Activated B cell treated with CpG ODN at 0.5 μM for 24 hours (primary cell): ENCODE measurements at regions of chr15 and their contacts with region 1.

Region 1: DNA sequence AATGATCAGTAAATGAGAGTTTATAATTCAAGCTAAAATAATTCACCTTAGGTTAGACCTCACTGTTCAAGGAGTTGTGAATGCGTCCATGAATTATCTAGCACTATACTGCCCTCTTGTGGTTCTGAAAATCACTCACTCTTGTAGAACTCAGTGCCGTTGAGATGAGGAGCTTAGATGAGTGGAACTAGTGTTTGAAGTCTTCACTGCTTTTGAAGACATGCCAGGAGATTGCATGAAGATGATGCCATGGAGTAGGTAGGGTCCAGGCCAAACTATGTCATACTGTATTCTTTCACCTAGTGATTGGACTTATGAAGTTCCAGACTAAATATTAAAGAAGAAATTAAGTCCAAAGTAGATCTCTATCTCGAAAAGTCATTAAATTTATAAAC is 28.8 kb downstream of the LYSMD4 start:
- DNase-seq: no peak
- ATAC-seq: peak; percentile 83
- H3K4me3 Mint-ChIP-seq: no peak overlapping the region
- H3K27ac Mint-ChIP-seq: peak overlapping the region; percentile 24
- H3K4me1 Mint-ChIP-seq: peaks cover 27% of the 10 kb centered on the region
- H3K27me3 Mint-ChIP-seq: no peaks in the 10 kb centered on the region
- CTCF ChIP-seq: no peak

Region 2: DNA sequence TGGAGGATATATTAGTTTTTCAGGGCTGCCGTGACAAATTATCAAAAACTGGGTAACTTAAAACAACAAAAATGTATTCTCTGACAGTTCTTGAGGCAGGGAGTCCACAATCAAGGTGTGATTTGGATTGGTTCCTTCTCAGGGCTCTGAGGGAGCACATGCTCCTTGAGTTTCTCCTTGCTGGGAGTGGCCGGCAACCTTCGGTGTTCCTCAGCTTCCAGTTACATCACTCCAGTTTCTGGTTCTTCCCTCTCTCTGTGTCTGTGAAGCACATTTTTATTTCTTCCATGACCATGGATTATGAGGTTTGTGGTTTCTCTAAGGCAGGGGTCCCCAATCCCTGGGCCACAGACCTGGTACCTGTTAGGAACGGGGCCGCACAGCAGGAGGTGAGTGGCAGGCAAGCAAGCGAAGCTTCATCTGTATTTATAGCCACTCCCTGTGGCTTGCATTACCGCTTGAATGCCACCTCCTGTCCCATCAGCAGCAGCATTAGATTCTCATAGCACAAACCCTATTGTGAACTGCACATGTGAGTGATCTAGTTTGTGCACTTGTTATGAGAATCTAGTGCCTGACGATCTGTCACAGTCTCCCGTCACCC is 428.8 kb before region 1 on chr15:
- CTCF ChIA-PET with region 1: interaction called, 143 read pairs
- POLR2A ChIA-PET with region 1: interaction called, 7 read pairs
- intact Hi-C with region 1: loop called (anchors 1 kb)
- DNase-seq: no peak
- ATAC-seq: peak; percentile 34
- H3K4me3 Mint-ChIP-seq: no peak overlapping the region
- H3K27ac Mint-ChIP-seq: no peak overlapping the region
- H3K4me1 Mint-ChIP-seq: peaks cover 10% of the 10 kb centered on the region
- H3K27me3 Mint-ChIP-seq: no peaks in the 10 kb centered on the region
- CTCF ChIP-seq: no peak

Region 3: GRCh38 chr15:99343881-99344551 is 360.4 kb before region 1 on chr15:
- CTCF ChIA-PET with region 1: interaction called, 44 read pairs
- POLR2A ChIA-PET with region 1: interaction called, 4 read pairs
- intact Hi-C with region 1: loop called (anchors 1 kb)
- DNase-seq: peak; percentile 20
- ATAC-seq: peak; percentile 61
- H3K4me3 Mint-ChIP-seq: no peak overlapping the region
- H3K27ac Mint-ChIP-seq: no peak overlapping the region
- H3K4me1 Mint-ChIP-seq: peaks cover 31% of the 10 kb centered on the region
- H3K27me3 Mint-ChIP-seq: no peaks in the 10 kb centered on the region
- CTCF ChIP-seq: no peak

Region 4: GRCh38 chr15:99409097-99409473 is 295.4 kb before region 1 on chr15:
- CTCF ChIA-PET with region 1: interaction called, 60 read pairs
- POLR2A ChIA-PET with region 1: interaction called, 3 read pairs
- intact Hi-C with region 1: loop called (anchors 1 kb)
- DNase-seq: no peak
- ATAC-seq: peak; percentile 50
- H3K4me3 Mint-ChIP-seq: no peak overlapping the region
- H3K27ac Mint-ChIP-seq: no peak overlapping the region
- H3K4me1 Mint-ChIP-seq: peaks cover 5% of the 10 kb centered on the region
- H3K27me3 Mint-ChIP-seq: no peaks in the 10 kb centered on the region
- CTCF ChIP-seq: no peak

Region 5: DNA sequence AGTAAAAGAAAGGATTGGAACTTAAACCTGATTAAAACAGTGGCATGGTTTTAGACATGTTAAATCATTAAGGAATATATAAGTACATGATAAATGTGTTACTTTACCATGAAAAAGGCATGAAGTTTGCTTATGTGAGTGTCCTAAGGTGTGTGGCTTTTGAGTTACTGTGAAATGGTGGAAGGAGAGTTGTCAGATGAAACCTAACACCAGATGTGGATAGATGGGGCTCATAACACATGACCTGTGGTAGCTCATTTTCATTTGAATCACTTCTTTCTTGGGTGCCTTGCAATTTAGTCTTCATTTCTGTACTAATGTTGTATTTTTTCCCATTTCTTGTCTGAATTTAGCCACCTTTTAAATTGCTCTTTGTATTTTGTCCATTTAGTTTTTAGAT is 125.6 kb before region 1 on chr15:
- CTCF ChIA-PET with region 1: interaction called, 17 read pairs
- POLR2A ChIA-PET with region 1: no interaction called
- intact Hi-C with region 1: no loop called
- DNase-seq: no peak
- ATAC-seq: no peak
- H3K4me3 Mint-ChIP-seq: peak overlapping the region; percentile 29
- H3K27ac Mint-ChIP-seq: peak overlapping the region; percentile 4
- H3K4me1 Mint-ChIP-seq: peaks cover 83% of the 10 kb centered on the region
- H3K27me3 Mint-ChIP-seq: no peaks in the 10 kb centered on the region
- CTCF ChIP-seq: no peak

Region 6: DNA sequence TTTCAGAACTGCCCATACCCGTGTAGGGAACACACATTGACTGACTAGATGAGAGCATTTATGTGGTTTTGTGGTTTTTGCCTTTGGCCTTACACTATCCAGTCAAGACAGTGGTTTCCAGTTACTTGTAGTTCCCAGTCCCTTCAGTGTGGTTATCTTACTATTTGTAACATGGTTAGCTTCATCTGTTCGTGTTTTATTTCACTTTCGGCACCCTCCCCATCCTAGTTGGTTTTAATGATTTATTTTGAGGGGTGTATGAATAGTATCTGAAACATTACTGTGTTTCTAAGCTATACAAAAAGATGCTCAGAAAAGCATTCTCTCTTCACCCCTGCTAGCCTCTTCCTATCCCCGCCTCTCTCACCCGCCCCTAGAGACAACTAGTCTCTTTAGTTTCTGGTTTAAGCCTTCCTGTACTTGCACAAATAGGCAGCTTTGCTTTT is 14.7 kb after region 1 on chr15:
- CTCF ChIA-PET with region 1: interaction called, 24 read pairs
- POLR2A ChIA-PET with region 1: no interaction called
- intact Hi-C with region 1: no loop called
- DNase-seq: no peak
- ATAC-seq: no peak
- H3K4me3 Mint-ChIP-seq: no peak overlapping the region
- H3K27ac Mint-ChIP-seq: no peak overlapping the region
- H3K4me1 Mint-ChIP-seq: peaks cover 41% of the 10 kb centered on the region
- H3K27me3 Mint-ChIP-seq: no peaks in the 10 kb centered on the region
- CTCF ChIP-seq: no peak

Region 7: DNA sequence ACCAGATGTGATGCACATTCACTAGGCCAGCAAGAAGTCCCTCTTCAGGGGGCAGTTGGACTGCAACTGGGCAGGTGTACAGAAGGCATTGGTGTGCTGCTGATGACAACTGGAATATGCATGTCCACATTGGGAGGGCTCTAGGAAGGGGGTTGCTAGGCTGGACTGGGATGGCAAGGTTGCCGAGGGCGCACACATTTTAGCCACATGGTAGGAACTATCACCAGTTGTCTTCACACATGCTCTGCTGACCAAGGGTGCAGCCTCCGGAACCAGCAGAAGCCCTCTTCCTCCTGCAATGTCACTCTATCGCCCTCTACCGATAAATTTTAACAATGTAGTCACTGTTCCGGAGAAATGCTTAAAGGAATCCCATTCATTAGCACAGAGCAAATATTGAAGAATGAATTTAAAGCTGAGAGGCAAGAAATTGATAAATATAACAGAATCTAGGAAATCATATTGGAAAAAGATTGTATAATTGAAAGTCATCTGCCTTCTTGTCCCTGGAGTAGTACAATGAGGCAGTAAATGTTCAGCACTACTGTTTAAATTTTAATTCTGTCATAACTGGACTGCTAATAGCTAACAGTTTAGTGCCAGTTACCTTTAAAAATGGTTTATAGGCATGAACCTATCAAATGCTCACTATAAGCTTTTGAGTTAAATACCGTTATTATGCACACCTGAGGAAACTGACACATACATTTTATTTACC is 51.4 kb after region 1 on chr15:
- CTCF ChIA-PET with region 1: interaction called, 18 read pairs
- POLR2A ChIA-PET with region 1: interaction called, 3 read pairs
- intact Hi-C with region 1: loop called (anchors 1 kb)
- DNase-seq: peak; percentile 24
- ATAC-seq: peak; percentile 94
- H3K4me3 Mint-ChIP-seq: no peak overlapping the region
- H3K27ac Mint-ChIP-seq: no peak overlapping the region
- H3K4me1 Mint-ChIP-seq: peaks cover 7% of the 10 kb centered on the region
- H3K27me3 Mint-ChIP-seq: no peaks in the 10 kb centered on the region
- CTCF ChIP-seq: peak; percentile 79